Mammary epithelial cell (primary cell): ENCODE measurements at regions of chr20 and their contacts with region 1.

Region 1: GRCh38 chr20:33947709-33948295 is 45.9 kb upstream of the RALY start:
- DNase-seq: peak; percentile 46
- H3K4me3 ChIP-seq: no peak overlapping the region
- H3K27ac ChIP-seq: no peak overlapping the region
- H3K4me1 ChIP-seq: no peaks in the 10 kb centered on the region
- H3K27me3 ChIP-seq: no peaks in the 10 kb centered on the region
- CTCF ChIP-seq: peak; percentile 60 to 77

Region 2: GRCh38 chr20:33686100-33686983 is 261.5 kb before region 1 on chr20 and contains the start of gene E2F1:
- CTCF ChIA-PET with region 1: no interaction called
- dilution Hi-C with region 1: no loop called
- in situ Hi-C with region 1: no loop called
- intact Hi-C with region 1: no loop called
- DNase-seq: peak; percentile 93
- H3K4me3 ChIP-seq: peak within 1 kb of the TSS; percentile 46 to 71 (median 47)
- H3K27ac ChIP-seq: no peak within 1 kb of the TSS
- H3K4me1 ChIP-seq: peaks cover 9% of the 10 kb centered on the region
- H3K27me3 ChIP-seq: no peaks in the 10 kb centered on the region
- CTCF ChIP-seq: peak in 1 of 2 donors; percentile 27
- total RNA-seq, gene E2F1: 1.8 to 12.7 TPM

Region 3: DNA sequence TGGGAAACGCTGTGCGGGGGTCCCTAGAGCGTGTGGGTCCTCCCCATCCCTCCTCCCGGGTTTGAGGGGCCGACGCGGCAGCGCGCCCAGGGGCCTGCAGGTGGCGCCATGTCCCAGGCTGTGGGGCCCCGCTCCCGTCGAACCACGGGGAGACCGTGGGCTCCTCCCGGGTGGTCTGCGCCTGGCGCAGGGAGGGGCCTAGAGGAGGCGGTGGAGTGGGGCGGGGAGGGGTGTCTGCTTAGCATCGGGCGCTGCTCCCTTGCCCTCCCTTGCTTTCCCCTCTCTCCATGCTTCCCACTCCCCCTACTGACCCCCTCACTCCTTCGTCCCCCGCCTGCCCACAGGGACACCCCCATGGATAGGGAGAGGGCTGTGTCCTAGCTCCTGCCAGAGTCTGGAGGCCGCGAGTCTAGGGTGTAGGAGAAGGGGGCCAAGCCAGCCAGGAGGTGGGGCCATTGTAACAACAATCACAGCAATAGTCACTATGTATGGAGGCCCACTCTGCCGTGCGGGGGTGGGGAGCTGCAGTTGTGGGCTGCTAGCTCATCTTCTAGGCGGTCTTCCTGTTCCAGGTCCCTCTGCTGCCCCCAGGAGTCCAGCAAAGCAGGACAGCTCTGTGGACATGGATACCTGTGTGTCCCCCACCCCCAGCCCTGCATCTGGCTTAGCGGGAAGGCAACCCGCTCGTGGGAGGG is 84.9 kb before region 1 on chr20:
- CTCF ChIA-PET with region 1: no interaction called
- dilution Hi-C with region 1: loop called (anchors 5 kb)
- in situ Hi-C with region 1: no loop called
- intact Hi-C with region 1: no loop called
- DNase-seq: no peak
- H3K4me3 ChIP-seq: no peak overlapping the region
- H3K27ac ChIP-seq: no peak overlapping the region
- H3K4me1 ChIP-seq: peaks cover 4% of the 10 kb centered on the region
- H3K27me3 ChIP-seq: no peaks in the 10 kb centered on the region
- CTCF ChIP-seq: peak; percentile 58 to 81

Region 4: GRCh38 chr20:33981964-33982363 is 34.2 kb after region 1 on chr20:
- CTCF ChIA-PET with region 1: no interaction called
- dilution Hi-C with region 1: no loop called
- in situ Hi-C with region 1: no loop called
- intact Hi-C with region 1: no loop called
- DNase-seq: no peak
- H3K4me3 ChIP-seq: no peak overlapping the region
- H3K27ac ChIP-seq: no peak overlapping the region
- H3K4me1 ChIP-seq: no peaks in the 10 kb centered on the region
- H3K27me3 ChIP-seq: peaks cover 2% of the 10 kb centered on the region
- CTCF ChIP-seq: no peak

Region 5: DNA sequence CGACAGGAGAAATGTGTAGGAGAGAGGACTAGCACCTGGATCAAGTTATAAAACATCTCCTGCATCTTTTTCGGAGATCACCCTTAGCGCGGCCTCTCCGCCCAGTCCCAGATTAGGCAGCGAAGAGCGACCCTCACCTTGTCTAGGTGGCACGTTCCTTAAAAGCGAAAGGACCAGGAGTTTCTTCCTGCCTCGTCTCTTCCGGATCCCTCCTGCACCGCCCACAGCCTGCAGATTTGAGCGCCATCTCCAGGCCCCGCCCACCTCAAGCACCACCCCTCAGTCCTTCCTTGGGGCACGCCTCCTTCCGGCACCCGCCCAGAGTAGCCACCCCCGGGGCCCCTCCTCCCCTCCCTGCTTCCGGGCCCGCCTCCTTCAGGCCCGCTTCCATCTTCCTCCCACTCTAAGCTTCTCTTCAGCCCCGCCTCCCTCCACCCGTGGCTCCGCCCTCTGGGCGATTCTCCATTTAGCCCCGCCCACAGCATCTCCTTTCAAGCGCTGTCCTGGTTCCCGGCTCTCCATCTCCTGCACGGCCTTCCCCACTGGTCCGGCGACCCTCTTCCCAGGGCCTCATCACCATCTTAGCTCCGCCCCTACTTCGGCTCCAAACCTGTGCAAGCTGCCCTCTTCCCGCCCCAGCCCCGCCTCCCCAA is 45.2 kb after region 1 on chr20:
- CTCF ChIA-PET with region 1: no interaction called
- dilution Hi-C with region 1: no loop called
- in situ Hi-C with region 1: no loop called
- intact Hi-C with region 1: loop called (anchors 5 kb)
- DNase-seq: peak; percentile 98
- H3K4me3 ChIP-seq: peak overlapping the region; percentile 68 to 93 (median 89)
- H3K27ac ChIP-seq: peak overlapping the region; percentile 86
- H3K4me1 ChIP-seq: peaks cover 15% of the 10 kb centered on the region
- H3K27me3 ChIP-seq: no peaks in the 10 kb centered on the region
- CTCF ChIP-seq: no peak